ENCODE measurements at regions of chr7 and their contacts with region 1.

Region 1: DNA sequence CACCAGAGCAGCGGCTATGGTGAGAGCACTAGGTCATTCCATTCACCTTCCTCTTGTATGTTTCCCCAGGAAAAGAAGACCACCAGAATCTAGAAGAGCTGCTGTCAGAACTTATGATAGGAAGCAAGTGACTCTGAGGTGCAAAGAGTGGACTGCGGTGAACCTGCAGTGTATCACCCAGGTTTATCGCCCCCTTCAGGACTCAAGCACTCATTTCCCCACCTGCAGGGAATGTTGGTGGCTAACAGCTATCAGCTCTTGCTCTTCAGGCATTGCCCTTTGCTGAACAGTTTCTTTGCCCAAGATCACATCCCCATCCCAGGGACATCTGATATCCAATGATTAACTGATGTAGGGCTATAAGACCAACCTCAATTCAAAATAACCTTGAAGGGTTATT is 66.3 kb upstream of the IL6 start:
- DNase-seq: peak; percentile 28
- H3K4me3 Mint-ChIP-seq: no peak overlapping the region
- H3K27ac Mint-ChIP-seq: no peak overlapping the region
- H3K4me1 Mint-ChIP-seq: peaks cover 36% of the 10 kb centered on the region
- H3K27me3 Mint-ChIP-seq: no peaks in the 10 kb centered on the region

Region 2: DNA sequence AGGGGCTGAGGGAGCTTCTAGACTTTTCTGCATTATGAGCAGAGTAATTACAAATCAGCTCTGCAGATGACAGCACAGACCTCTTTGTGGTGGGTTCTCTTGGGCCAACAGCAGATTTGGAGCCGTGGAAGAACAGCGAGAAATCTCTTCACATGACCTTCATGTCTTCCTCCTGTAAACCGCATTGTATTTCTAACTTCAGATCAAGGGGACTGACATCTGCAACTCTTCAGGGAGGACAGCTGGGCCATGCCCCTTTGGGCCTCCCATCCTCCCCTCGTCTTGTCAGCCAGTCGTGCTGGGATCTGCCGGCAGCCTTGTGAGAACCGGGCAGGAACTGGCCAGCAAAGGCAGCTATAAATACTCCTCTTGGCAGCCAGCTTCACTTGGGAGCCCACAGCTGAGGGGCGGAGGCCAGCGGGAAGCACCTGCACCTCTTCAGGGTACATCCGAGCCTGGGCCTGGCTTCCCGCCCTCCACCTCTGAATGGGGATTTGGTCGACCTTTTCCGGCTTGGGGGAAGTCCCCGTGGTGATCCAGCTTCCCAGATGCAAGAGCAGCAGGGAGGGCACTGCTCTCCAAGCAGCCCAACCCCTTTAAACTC is 215.5 kb before region 1 on chr7:
- CTCF ChIA-PET with region 1: no interaction called
- intact Hi-C with region 1: loop called (anchors 2 kb)
- DNase-seq: peak; percentile 24
- H3K4me3 Mint-ChIP-seq: no peak overlapping the region
- H3K27ac Mint-ChIP-seq: no peak overlapping the region
- H3K4me1 Mint-ChIP-seq: peaks cover 18% of the 10 kb centered on the region
- H3K27me3 Mint-ChIP-seq: peaks cover 3% of the 10 kb centered on the region

Region 3: GRCh38 chr7:22499044-22499443 is 161.7 kb before region 1 on chr7:
- CTCF ChIA-PET with region 1: no interaction called
- intact Hi-C with region 1: no loop called
- DNase-seq: no peak
- H3K4me3 Mint-ChIP-seq: no peak overlapping the region
- H3K27ac Mint-ChIP-seq: no peak overlapping the region
- H3K4me1 Mint-ChIP-seq: peaks cover 3% of the 10 kb centered on the region
- H3K27me3 Mint-ChIP-seq: peaks cover 16% of the 10 kb centered on the region

Region 4: DNA sequence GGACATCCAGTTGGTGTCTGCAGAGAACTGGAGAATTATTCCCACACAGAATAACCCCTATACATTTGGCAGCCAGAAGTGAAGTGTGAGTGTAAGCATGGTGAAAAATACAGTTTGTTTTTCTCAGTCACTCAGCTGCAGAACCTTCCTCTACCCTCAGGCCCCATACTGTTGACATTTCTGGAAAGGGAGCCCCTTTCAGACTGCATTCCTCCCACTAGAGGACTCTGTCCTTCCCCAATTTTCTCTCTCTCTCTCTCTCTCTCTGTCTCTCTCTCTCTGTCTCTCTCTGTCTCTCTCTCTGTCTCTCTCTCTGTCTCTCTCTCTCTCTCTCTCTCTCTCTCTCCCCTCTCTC is 74.0 kb before region 1 on chr7:
- CTCF ChIA-PET with region 1: interaction called, 3 read pairs
- intact Hi-C with region 1: loop called (anchors 1 kb)
- DNase-seq: no peak
- H3K4me3 Mint-ChIP-seq: no peak overlapping the region
- H3K27ac Mint-ChIP-seq: no peak overlapping the region
- H3K4me1 Mint-ChIP-seq: peaks cover 19% of the 10 kb centered on the region
- H3K27me3 Mint-ChIP-seq: peaks cover 21% of the 10 kb centered on the region

Region 5: DNA sequence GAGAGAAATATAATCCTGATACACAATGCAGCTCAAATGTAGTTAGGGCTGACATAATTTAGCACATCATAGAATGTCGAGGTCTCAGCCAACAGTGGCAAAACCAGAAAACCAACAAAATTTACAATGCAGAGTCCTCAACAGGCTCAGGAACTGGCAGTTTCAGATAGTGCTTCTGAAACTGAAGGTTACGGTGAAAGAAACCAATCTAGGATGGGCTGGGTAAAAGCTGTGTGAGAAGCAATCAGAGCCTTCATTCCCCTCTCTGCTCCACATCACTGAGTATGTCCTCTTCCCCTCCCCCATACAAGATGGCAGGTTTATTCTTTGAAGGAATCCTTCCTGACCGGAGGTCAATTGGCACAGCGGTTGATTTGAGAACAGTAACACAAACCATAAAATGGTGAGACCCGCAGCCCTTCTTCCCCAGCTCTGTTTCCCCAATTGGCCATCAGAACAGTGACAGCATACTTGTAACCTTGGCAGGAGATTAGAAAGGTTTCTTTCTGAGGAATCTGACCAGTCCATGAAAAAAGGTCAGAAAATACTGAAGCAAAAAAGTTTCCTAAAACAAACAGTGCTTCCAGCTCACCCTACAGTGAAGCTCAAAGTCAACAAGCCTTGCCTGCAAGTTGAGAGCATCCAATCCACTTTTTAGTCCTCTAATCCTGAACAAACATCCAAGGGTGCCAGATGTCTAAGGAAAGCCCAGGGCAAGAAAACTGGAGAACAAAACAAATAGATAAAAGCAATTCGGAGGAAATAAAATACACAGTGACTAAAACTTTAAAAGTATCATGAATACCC is 12.3 kb after region 1 on chr7:
- CTCF ChIA-PET with region 1: interaction called, 7 read pairs
- intact Hi-C with region 1: loop called (anchors 1 kb)
- DNase-seq: no peak
- H3K4me3 Mint-ChIP-seq: no peak overlapping the region
- H3K27ac Mint-ChIP-seq: no peak overlapping the region
- H3K4me1 Mint-ChIP-seq: peaks cover 64% of the 10 kb centered on the region
- H3K27me3 Mint-ChIP-seq: no peaks in the 10 kb centered on the region

Region 6: DNA sequence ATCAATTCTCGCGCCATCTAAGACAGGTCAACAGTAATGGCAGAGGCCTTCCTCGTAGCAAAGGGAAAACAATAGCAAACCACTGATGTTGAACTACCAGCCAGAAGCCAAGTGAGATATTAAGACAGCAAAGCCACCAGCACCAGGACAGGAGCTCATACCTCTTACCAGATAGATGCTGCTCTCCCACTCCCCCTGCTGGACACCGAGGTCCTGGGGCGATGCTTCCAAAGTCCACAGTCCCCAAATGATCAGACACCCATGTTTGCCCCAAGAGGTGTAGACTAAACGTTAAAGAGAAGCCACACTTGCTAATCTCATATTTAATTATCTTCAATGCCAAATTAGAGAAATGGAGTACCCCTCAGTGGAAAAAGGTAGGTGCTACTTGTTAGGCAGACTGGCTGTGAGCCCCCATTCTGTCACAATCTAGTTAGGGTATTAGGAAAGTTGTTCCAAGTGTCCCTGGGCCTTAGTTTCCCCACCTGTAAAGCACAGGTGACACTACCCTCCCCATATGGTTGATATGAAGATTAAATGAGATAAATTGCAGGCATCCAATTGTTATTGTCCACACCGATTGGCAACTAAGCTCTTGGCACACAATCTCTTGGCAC is 122.0 kb after region 1 on chr7:
- CTCF ChIA-PET with region 1: no interaction called
- intact Hi-C with region 1: loop called (anchors 1 kb)
- DNase-seq: peak; percentile 88
- H3K4me3 Mint-ChIP-seq: no peak overlapping the region
- H3K27ac Mint-ChIP-seq: no peak overlapping the region
- H3K4me1 Mint-ChIP-seq: no peaks in the 10 kb centered on the region
- H3K27me3 Mint-ChIP-seq: no peaks in the 10 kb centered on the region

Region 7: GRCh38 chr7:23055582-23056178 is 394.9 kb after region 1 on chr7:
- CTCF ChIA-PET with region 1: no interaction called
- intact Hi-C with region 1: loop called (anchors 5 kb)
- DNase-seq: peak; percentile 81
- H3K4me3 Mint-ChIP-seq: no peak overlapping the region
- H3K27ac Mint-ChIP-seq: no peak overlapping the region
- H3K4me1 Mint-ChIP-seq: peaks cover under 1% of the 10 kb centered on the region
- H3K27me3 Mint-ChIP-seq: no peaks in the 10 kb centered on the region

Measured in activated naive CD4-positive, alpha-beta T cell treated with anti-CD3 and anti-CD28 coated beads for 36 hours (primary cell).